Activated T-helper 1 cell treated with anti-CD3 and anti-CD28 coated beads, Interleukin-12 subunit alpha, Interleukin-12 subunit beta, Interleukin-2, Interleukin-4 antibody, amounts not matched to agents 30 ng/mL and 10 ng/mL and 1 ng/mL, durations not matched to agents 14 hours and 24 hours and 36 hours (primary cell): ENCODE measurements at regions of chr6 and their contacts with region 1.

Region 1: GRCh38 chr6:3742426-3743344 is 8.8 kb downstream of the PXDC1 start:
- DNase-seq: peak; percentile 75
- H3K4me3 Mint-ChIP-seq: no peak overlapping the region
- H3K27ac Mint-ChIP-seq: no peak overlapping the region
- H3K4me1 Mint-ChIP-seq: peaks cover 13% of the 10 kb centered on the region
- H3K27me3 Mint-ChIP-seq: peaks cover 12% of the 10 kb centered on the region

Region 2: DNA sequence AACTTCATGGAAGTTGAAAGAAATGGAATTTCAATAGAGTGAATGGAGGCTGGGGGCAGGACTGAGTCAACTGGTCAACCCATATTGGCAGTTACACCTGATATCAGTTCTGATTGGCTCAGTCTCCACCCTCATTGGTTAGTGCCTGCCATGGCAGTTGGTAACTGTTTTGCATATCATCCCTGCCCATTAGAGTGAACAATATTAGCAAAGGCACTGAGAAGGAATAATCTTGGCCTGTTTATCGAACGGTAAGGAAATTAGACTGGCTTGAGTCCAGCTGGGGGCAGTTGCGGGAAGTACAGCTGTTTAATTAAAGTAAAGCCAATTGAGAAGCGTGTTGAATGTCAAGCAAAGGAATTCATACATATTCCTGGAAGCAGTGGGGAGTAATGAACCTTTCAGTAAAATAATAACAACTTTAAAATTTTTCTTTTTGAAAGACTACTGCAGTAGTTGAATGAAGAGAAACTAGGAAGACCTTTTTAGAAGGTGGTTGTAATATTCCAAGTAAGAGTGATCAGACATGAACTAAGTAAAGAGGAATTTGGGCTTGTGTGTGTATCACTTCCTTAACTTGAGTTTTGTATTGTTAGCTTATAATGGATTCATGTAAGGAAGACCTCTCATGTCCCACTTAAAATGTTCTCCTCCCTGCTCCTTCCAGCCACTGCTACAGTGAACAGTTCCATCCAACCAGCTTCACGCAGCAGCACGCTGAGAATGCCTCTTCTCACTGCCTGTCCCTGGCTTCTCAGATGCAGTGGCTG is 89.3 kb after region 1 on chr6:
- intact Hi-C with region 1: no loop called
- DNase-seq: no peak
- H3K4me3 Mint-ChIP-seq: no peak overlapping the region
- H3K27ac Mint-ChIP-seq: no peak overlapping the region
- H3K4me1 Mint-ChIP-seq: peaks cover 5% of the 10 kb centered on the region
- H3K27me3 Mint-ChIP-seq: peaks cover 5% of the 10 kb centered on the region

Region 3: DNA sequence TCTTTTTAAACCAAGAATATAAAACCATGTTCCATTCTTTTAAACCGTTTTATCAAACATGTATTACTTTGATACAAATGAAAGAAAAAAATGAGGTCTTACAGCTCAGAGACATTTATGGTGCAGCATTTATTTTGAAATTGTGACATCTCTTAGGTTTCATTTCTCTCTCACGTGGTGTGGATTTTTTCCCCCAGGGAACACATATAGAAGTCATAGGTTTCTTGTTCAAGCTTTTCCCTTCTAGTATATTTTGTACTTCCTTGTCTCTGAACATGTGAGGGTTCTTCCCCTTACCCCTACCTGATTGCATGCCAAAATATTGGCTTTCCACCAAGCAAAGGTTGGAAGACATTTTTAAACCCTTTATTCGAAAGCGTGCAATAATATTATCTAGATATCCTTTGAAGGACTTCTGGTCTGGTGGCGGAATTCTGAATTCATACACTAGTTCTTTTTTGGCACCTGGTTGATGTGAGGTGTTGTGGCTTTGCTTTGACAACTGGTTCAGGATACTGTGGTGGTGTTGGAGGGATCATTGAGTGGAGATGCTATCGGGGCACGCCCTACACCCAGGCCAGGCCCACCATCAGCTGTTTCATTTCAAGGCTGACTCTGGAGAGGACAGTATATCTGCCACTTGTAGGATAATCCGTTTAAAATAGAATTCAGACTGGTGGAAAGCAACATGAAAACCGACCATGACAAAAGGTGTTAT is 100.9 kb after region 1 on chr6:
- intact Hi-C with region 1: no loop called
- DNase-seq: no peak
- H3K4me3 Mint-ChIP-seq: no peak overlapping the region
- H3K27ac Mint-ChIP-seq: no peak overlapping the region
- H3K4me1 Mint-ChIP-seq: peaks cover 15% of the 10 kb centered on the region
- H3K27me3 Mint-ChIP-seq: peaks cover 4% of the 10 kb centered on the region

Region 4: GRCh38 chr6:3887150-3887700 is 144.5 kb after region 1 on chr6:
- intact Hi-C with region 1: loop called (anchors 2 kb)
- DNase-seq: no peak
- H3K4me3 Mint-ChIP-seq: no peak overlapping the region
- H3K27ac Mint-ChIP-seq: no peak overlapping the region
- H3K4me1 Mint-ChIP-seq: no peaks in the 10 kb centered on the region
- H3K27me3 Mint-ChIP-seq: peaks cover 13% of the 10 kb centered on the region

Region 5: GRCh38 chr6:3977875-3978711 is 235.4 kb after region 1 on chr6:
- intact Hi-C with region 1: loop called (anchors 1 kb)
- DNase-seq: peak; percentile 24
- H3K4me3 Mint-ChIP-seq: no peak overlapping the region
- H3K27ac Mint-ChIP-seq: no peak overlapping the region
- H3K4me1 Mint-ChIP-seq: peaks cover 8% of the 10 kb centered on the region
- H3K27me3 Mint-ChIP-seq: peaks cover 17% of the 10 kb centered on the region

Region 6: DNA sequence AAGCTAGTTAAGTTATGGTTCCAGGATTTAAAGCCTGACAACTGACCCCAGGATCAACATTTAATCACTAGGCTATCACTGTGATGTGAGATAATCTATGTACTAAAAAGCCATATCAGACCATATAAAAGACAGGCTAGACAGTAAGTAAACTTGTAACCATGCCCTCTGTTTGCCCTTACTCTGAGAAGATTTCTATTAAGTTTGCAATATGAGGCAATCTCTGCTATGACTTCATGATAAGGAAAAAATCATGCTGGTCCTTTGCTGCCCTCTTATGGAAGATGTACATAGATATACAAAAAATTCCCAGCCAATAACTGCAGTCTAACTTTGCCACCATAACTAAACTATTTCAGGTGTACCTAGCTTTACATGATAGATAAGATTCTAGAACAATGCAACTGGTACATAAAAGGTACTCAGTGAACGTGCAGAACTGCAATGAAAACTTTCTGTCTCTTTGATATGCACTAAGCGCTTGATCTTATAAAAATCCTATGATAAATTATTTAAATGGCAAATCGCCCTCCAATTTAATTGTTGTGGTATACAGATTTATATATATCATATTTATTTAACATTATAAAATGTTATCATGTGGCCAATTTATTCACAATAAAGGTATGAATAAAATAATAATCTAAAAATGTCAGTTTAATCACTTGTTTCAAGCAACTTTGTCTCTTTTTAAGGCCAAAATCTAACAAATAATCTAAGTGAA is 265.8 kb after region 1 on chr6:
- intact Hi-C with region 1: loop called (anchors 1 kb)
- DNase-seq: no peak
- H3K4me3 Mint-ChIP-seq: no peak overlapping the region
- H3K27ac Mint-ChIP-seq: no peak overlapping the region
- H3K4me1 Mint-ChIP-seq: peaks cover 59% of the 10 kb centered on the region
- H3K27me3 Mint-ChIP-seq: no peaks in the 10 kb centered on the region

Region 7: DNA sequence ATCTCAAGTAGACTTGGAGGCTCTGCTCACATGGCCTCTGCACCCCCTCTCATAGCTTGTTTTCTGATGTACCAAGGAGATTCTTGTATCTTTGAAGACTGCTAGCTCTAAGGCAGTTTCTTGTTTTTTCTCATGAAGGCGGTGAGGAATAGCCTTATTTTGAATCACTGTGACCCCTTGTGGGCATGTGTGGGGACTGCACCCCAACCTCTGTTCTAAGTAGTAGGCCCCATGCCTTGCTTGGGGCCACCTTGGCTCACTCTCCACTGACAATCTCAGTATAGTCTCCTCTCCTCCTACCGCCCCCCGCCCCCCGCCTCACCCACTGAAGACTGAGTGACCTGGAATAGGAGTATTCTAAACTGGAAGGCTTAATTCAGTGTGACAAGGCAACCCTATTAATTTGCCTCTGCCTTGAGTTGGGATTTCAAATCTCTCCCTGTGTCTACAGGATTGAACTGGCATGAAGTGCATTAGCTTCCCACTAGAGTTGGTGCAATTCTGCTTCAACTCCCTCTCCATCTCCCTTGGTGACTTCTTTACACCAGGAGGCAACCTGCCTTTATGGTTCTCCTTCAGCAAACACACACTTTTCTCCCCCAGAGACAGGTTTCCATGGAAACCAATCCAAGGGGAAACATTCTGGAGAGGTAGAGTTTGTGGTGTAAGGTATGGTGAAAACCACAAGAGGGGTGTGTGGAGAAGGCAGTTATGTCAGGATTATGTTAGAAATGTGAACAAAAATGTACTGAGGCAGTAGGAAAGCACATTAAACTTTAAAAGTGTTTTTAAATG is 468.1 kb after region 1 on chr6:
- intact Hi-C with region 1: loop called (anchors 1 kb)
- DNase-seq: peak; percentile 27
- H3K4me3 Mint-ChIP-seq: no peak overlapping the region
- H3K27ac Mint-ChIP-seq: no peak overlapping the region
- H3K4me1 Mint-ChIP-seq: peaks cover 20% of the 10 kb centered on the region
- H3K27me3 Mint-ChIP-seq: no peaks in the 10 kb centered on the region